ENCODE measurements at regions of chr12 and their contacts with region 1.

Region 1: GRCh38 chr12:68610370-68611093 is at the start of gene RAP1B:
- DNase-seq: peak; percentile 89
- H3K4me3 Mint-ChIP-seq: peak within 1 kb of the TSS; percentile 91
- H3K27ac Mint-ChIP-seq: peak within 1 kb of the TSS; percentile 98
- H3K4me1 Mint-ChIP-seq: peaks cover 37% of the 10 kb centered on the region
- H3K27me3 Mint-ChIP-seq: no peaks in the 10 kb centered on the region
- total RNA-seq, gene RAP1B: 170 TPM

Region 2: DNA sequence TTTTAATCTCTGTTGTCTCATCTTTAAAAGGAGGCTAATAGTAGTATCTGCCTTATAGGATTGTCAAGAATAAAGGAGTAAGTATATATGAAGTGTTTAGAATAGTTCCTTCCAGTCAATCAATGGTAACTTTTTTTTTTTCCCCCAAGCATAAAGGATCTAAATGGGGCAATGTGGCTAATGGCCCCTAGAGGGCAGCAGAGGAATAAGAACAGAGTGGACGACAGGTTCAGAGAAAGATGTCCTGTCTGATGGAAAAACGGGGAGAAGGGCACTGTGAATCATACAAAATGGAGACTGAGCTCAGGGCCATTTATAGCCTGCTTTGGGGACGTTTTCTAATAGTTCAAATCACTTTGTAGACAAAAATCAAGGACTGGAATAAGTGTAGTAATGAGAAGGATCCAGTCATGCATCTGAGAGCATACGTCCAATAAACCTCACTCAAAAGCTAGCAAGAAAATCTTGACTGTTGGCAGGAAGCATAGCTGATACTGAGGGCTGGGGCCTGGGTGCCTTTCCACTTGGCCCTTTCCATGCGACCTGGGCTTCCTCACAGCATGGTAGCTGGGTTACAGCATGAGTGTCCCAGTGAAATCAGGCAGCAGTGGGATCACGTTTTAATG is 570.0 kb before region 1 on chr12:
- CTCF ChIA-PET with region 1: no interaction called
- intact Hi-C with region 1: loop called (anchors 10 kb)
- DNase-seq: peak; percentile 83
- H3K4me3 Mint-ChIP-seq: no peak overlapping the region
- H3K27ac Mint-ChIP-seq: peak overlapping the region; percentile 29
- H3K4me1 Mint-ChIP-seq: peaks cover 42% of the 10 kb centered on the region
- H3K27me3 Mint-ChIP-seq: no peaks in the 10 kb centered on the region

Region 3: DNA sequence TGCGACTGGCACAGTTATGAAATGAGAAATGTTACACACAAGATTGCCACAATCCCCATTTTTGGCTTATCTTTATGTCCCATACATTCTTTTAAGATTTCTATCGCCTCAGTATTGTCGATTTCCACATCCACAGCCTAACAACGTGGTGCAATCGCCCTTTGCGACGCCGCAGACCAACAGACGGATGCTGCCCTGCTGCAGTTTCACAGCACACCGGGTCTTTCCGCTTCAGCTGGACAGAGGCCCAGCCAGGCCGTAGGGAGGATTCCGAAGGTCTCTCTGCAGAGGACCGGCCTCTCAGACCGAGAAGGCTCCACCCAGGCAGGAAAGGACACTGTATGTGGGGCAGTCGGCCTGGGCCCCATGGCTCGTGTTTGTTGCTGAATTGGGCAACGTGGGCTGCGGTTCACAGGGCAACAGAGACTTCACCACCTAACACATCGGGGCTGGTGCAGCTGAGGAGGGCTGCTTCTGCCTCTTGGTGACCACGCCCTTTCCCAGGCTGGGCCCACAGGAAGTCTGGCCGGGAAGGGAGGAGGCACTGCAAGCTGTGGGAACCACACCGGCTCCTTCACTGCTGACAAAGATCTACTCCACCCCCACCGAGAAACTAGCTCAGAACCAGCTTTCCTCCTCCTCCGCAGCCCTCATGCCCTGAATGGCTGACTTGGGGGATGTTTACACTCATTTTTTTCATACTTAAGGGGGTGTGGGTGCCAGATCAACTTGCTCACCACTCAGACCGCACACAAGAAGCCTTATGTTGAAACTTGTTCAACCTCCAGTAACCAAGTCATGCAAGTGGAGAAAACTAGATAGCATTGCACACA is 245.4 kb before region 1 on chr12:
- CTCF ChIA-PET with region 1: no interaction called
- intact Hi-C with region 1: loop called (anchors 1 kb)
- DNase-seq: peak; percentile 90
- H3K4me3 Mint-ChIP-seq: peak overlapping the region; percentile 79
- H3K27ac Mint-ChIP-seq: peak overlapping the region; percentile 90
- H3K4me1 Mint-ChIP-seq: peaks cover 57% of the 10 kb centered on the region
- H3K27me3 Mint-ChIP-seq: no peaks in the 10 kb centered on the region

Region 4: GRCh38 chr12:68406134-68406594 is 204.4 kb before region 1 on chr12:
- CTCF ChIA-PET with region 1: no interaction called
- intact Hi-C with region 1: no loop called
- DNase-seq: no peak
- H3K4me3 Mint-ChIP-seq: no peak overlapping the region
- H3K27ac Mint-ChIP-seq: no peak overlapping the region
- H3K4me1 Mint-ChIP-seq: peaks cover 4% of the 10 kb centered on the region
- H3K27me3 Mint-ChIP-seq: no peaks in the 10 kb centered on the region

Region 5: DNA sequence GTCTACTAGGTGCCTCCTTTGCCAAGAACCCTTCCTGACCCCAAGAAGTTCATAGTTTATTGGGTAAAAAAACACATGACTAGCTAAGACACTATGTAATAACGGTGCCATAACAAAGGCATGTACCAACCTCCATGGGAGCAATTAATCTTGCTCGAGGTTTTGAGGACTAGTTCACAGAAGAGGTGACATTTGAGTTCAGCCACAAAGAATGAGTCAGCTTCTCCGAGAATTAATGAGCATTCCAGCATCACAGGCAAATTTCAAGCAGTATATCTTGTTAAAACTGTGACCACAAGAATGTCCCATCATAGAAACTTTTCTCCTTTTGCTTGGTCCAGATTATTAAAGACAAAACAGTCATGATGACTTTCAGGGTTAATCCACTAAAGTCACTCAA is 112.8 kb before region 1 on chr12:
- CTCF ChIA-PET with region 1: interaction called, 3 read pairs
- intact Hi-C with region 1: loop called (anchors 1 kb)
- DNase-seq: peak; percentile 17
- H3K4me3 Mint-ChIP-seq: peak overlapping the region; percentile 35
- H3K27ac Mint-ChIP-seq: peak overlapping the region; percentile 80
- H3K4me1 Mint-ChIP-seq: peaks cover 28% of the 10 kb centered on the region
- H3K27me3 Mint-ChIP-seq: no peaks in the 10 kb centered on the region

Region 6: GRCh38 chr12:68641138-68641537 is 30.6 kb after region 1 on chr12:
- CTCF ChIA-PET with region 1: no interaction called
- intact Hi-C with region 1: loop called (anchors 2 kb)
- DNase-seq: peak; percentile 75
- H3K4me3 Mint-ChIP-seq: peak overlapping the region; percentile 21
- H3K27ac Mint-ChIP-seq: peak overlapping the region; percentile 50
- H3K4me1 Mint-ChIP-seq: peaks cover 88% of the 10 kb centered on the region
- H3K27me3 Mint-ChIP-seq: no peaks in the 10 kb centered on the region

Region 7: GRCh38 chr12:68745904-68746571 is 135.5 kb after region 1 on chr12 and contains the start of gene SLC35E3:
- CTCF ChIA-PET with region 1: no interaction called
- intact Hi-C with region 1: loop called (anchors 2 kb)
- DNase-seq: peak; percentile 93
- H3K4me3 Mint-ChIP-seq: peak within 1 kb of the TSS; percentile 95
- H3K27ac Mint-ChIP-seq: peak within 1 kb of the TSS; percentile 74
- H3K4me1 Mint-ChIP-seq: peaks cover 22% of the 10 kb centered on the region
- H3K27me3 Mint-ChIP-seq: no peaks in the 10 kb centered on the region
- total RNA-seq, gene SLC35E3: 2.8 to 3.1 TPM

Region 8: GRCh38 chr12:68831272-68831671 is 220.7 kb after region 1 on chr12:
- CTCF ChIA-PET with region 1: no interaction called
- intact Hi-C with region 1: no loop called
- DNase-seq: no peak
- H3K4me3 Mint-ChIP-seq: no peak overlapping the region
- H3K27ac Mint-ChIP-seq: no peak overlapping the region
- H3K4me1 Mint-ChIP-seq: peaks cover 25% of the 10 kb centered on the region
- H3K27me3 Mint-ChIP-seq: no peaks in the 10 kb centered on the region